ENCODE measurements at regions of chr7 and their contacts with region 1.

Region 1: GRCh38 chr7:2354186-2354938 is at the start of gene EIF3B:
- DNase-seq: peak; percentile 88
- ATAC-seq: peak; percentile 85
- H3K4me3 Mint-ChIP-seq: peak within 1 kb of the TSS; percentile 94
- H3K27ac Mint-ChIP-seq: peak within 1 kb of the TSS; percentile 100
- H3K4me1 Mint-ChIP-seq: peaks cover 33% of the 10 kb centered on the region
- H3K27me3 Mint-ChIP-seq: no peaks in the 10 kb centered on the region
- CTCF ChIP-seq: no peak
- total RNA-seq, gene EIF3B: 198 and 202 TPM in 2 replicates

Region 2: GRCh38 chr7:1919539-1920265 is 434.7 kb before region 1 on chr7:
- CTCF ChIA-PET with region 1: no interaction called
- POLR2A ChIA-PET with region 1: no interaction called
- intact Hi-C with region 1: loop called (anchors 5 kb)
- DNase-seq: no peak
- ATAC-seq: peak; percentile 32
- H3K4me3 Mint-ChIP-seq: peak overlapping the region; percentile 78
- H3K27ac Mint-ChIP-seq: no peak overlapping the region
- H3K4me1 Mint-ChIP-seq: peaks cover 30% of the 10 kb centered on the region
- H3K27me3 Mint-ChIP-seq: no peaks in the 10 kb centered on the region
- CTCF ChIP-seq: no peak

Region 3: DNA sequence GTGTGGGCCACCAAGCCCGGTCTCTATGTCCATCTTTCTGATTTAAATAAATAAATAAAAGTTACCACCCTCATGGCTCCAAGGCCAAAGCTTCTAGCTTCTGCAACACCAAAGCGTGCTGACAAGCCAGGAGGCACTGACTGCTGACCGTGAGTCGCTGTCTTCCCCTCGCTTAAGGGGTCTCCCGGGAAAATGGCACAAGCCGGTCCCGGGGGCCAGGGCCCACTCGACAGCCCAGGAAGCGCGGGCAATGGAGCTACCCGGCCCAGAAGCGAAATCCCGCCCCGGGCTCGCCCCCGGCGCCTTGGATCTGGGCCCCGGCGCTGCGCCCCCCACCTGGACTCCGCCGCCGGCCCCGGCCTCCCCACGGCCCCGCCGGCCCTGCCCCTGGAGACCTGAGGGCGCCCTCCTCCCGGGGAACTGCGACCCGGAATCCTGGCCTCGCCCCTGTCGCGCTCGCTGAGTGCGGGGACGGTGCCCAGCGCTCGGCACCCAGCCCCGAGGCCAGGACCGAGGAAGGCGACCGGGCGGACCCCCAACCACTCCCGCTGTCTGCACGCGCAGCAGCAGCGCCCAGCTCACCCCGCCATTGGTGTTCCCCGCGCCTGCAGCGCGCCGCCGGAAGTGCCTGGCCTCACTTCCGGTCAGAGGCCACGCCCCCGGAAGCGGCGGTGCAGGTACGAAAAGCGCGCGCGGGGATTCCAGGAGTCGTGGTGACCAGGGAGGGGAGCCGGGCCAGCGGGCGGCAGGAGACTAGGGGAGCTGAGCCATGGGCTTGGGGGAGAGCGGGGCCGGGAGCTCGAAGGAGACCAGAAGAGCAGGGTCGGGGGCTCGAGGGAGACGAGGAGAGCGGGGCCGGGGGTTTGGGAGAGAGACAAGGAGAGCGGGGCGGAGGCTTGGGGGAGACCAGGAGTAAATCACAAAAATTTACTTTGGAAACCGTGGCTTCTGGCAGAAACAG is 112.5 kb before region 1 on chr7 and contains the starts of genes MRM2 and NUDT1:
- CTCF ChIA-PET with region 1: no interaction called
- POLR2A ChIA-PET with region 1: interaction called, 17 read pairs
- intact Hi-C with region 1: no loop called
- DNase-seq: peak; percentile 73
- ATAC-seq: peak; percentile 25
- H3K4me3 Mint-ChIP-seq: peak within 1 kb of the TSS; percentile 90
- H3K27ac Mint-ChIP-seq: peak within 1 kb of the TSS; percentile 89
- H3K4me1 Mint-ChIP-seq: peaks cover 71% of the 10 kb centered on the region
- H3K27me3 Mint-ChIP-seq: no peaks in the 10 kb centered on the region
- CTCF ChIP-seq: no peak
- total RNA-seq, gene MRM2: 35.3 and 36.5 TPM in 2 replicates
- total RNA-seq, gene NUDT1: 38.0 and 42.6 TPM in 2 replicates

Region 4: DNA sequence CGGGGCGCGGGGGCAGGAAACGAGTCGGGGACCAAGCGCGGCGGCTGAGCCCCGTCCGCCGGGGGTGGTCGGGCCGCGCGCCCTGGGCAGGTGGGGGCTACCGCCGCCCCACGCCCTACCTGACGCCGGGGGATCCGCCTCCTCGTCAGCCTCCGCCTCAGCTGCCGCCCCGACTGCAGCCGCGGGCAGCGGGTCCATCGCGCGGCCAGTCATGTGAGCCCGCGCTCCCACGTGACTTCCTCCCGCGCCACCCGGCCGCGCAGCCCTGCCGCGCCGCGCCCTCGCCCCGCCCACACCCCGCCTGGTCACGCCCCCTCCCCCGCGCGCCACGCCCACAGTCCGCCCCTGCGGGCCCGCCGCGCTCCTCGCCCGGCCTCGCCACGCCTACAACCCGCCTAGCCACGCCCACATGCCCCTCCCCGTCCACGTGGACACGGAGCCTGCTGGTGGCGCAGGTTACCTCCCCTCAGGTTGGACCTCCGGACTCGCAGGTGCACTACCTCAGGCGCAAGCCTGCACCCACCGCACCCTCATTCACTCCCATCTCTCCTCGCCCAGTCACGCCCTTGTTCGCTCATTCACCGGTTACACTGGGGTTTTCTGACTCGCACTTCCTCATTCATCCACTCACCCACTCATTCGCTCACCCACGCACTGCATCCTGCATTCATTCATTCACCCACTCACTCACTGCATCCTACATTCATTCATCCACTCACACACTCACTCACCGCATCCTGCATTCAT is 40.0 kb before region 1 on chr7 and contains the start of gene SNX8:
- CTCF ChIA-PET with region 1: no interaction called
- POLR2A ChIA-PET with region 1: interaction called, 10 read pairs
- intact Hi-C with region 1: loop called (anchors 1 kb)
- DNase-seq: peak; percentile 99
- ATAC-seq: peak; percentile 77
- H3K4me3 Mint-ChIP-seq: no peak within 1 kb of the TSS
- H3K27ac Mint-ChIP-seq: peak within 1 kb of the TSS; percentile 98
- H3K4me1 Mint-ChIP-seq: peaks cover 47% of the 10 kb centered on the region
- H3K27me3 Mint-ChIP-seq: no peaks in the 10 kb centered on the region
- CTCF ChIP-seq: no peak
- total RNA-seq, gene SNX8: 175 and 181 TPM in 2 replicates

Region 5: GRCh38 chr7:2384354-2385243 is 30.2 kb after region 1 on chr7:
- CTCF ChIA-PET with region 1: no interaction called
- POLR2A ChIA-PET with region 1: no interaction called
- intact Hi-C with region 1: no loop called
- DNase-seq: no peak
- ATAC-seq: no peak
- H3K4me3 Mint-ChIP-seq: no peak overlapping the region
- H3K27ac Mint-ChIP-seq: no peak overlapping the region
- H3K4me1 Mint-ChIP-seq: no peaks in the 10 kb centered on the region
- H3K27me3 Mint-ChIP-seq: no peaks in the 10 kb centered on the region
- CTCF ChIP-seq: no peak

Region 6: GRCh38 chr7:2417981-2418481 is 63.7 kb after region 1 on chr7:
- CTCF ChIA-PET with region 1: no interaction called
- POLR2A ChIA-PET with region 1: no interaction called
- intact Hi-C with region 1: no loop called
- DNase-seq: no peak
- ATAC-seq: no peak
- H3K4me3 Mint-ChIP-seq: no peak overlapping the region
- H3K27ac Mint-ChIP-seq: no peak overlapping the region
- H3K4me1 Mint-ChIP-seq: peaks cover 21% of the 10 kb centered on the region
- H3K27me3 Mint-ChIP-seq: no peaks in the 10 kb centered on the region
- CTCF ChIP-seq: no peak

Region 7: DNA sequence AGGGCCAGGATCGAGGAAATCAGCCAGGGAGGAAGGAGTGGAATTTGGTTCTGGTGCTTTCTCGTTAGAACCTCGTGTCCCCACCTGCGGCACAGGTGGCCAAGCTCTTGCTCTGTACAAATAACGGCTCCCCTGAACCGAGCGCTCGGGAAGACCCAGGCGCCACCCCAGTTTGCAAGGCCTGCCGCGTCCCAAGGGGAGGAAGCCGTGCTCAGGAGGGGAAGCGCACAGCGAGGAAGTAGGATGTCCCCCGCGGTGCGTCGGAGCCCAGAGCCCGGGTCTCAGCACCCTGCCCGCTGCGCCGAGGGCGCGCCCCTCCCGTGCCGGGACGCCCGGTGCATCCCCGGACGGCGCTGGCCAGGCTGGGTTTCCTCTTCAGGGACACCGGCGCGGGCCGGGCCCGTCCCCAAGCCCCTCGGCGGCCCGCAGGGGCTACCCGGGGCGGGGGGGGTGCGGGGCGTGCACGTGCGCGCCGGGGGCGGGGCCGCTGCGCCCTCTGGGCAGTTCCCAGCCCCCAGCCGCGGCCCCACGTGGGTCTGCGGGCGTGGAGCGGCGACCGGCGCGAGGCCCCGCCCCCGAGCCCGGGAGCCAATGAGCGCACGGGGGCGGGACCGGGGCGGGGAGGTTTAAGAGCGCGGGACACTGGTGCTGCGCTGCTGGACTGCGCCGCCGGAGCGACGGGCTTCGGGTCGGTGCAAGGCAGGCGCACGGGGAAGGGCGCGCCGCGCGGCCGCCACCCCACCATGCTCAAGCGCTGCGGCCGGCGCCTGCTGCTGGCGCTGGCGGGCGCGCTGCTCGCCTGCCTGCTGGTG is 165.0 kb after region 1 on chr7 and contains the start of gene LFNG:
- CTCF ChIA-PET with region 1: no interaction called
- POLR2A ChIA-PET with region 1: no interaction called
- intact Hi-C with region 1: loop called (anchors 2 kb)
- DNase-seq: peak; percentile 94
- ATAC-seq: peak; percentile 75
- H3K4me3 Mint-ChIP-seq: peak within 1 kb of the TSS; percentile 96
- H3K27ac Mint-ChIP-seq: peak within 1 kb of the TSS; percentile 87
- H3K4me1 Mint-ChIP-seq: peaks cover 49% of the 10 kb centered on the region
- H3K27me3 Mint-ChIP-seq: no peaks in the 10 kb centered on the region
- CTCF ChIP-seq: no peak
- total RNA-seq, gene LFNG: 87.4 and 95.8 TPM in 2 replicates

Measured in activated B cell treated with CpG ODN at 0.5 μM for 24 hours (primary cell).